CD4-positive, alpha-beta T cell (primary cell): ENCODE measurements at regions of chr4 and their contacts with region 1.

Region 1: GRCh38 chr4:123649645-123650391 is 253.2 kb downstream of the SPRY1 start:
- DNase-seq: no peak
- ATAC-seq: no peak
- H3K4me3 ChIP-seq: no peak overlapping the region
- H3K4me3 Mint-ChIP-seq: no peak overlapping the region
- H3K27ac ChIP-seq: no peak overlapping the region
- H3K27ac Mint-ChIP-seq: no peak overlapping the region
- H3K4me1 ChIP-seq: no peaks in the 10 kb centered on the region
- H3K4me1 Mint-ChIP-seq: no peaks in the 10 kb centered on the region
- H3K27me3 ChIP-seq: no peaks in the 10 kb centered on the region
- H3K27me3 Mint-ChIP-seq: no peaks in the 10 kb centered on the region
- CTCF ChIP-seq: no peak

Region 2: GRCh38 chr4:123564758-123565346 is 85.0 kb before region 1 on chr4:
- CTCF ChIA-PET with region 1: no interaction called
- POLR2A ChIA-PET with region 1: no interaction called
- intact Hi-C with region 1: loop called in 1 of 2 experiments (anchors 10 kb)
- DNase-seq: peak in 12 of 14 experiments; percentile 8 to 79 (median 22)
- ATAC-seq: peak; percentile 86
- H3K4me3 ChIP-seq: no peak overlapping the region
- H3K4me3 Mint-ChIP-seq: no peak overlapping the region
- H3K27ac ChIP-seq: no peak overlapping the region
- H3K27ac Mint-ChIP-seq: no peak overlapping the region
- H3K4me1 ChIP-seq: no peaks in the 10 kb centered on the region
- H3K4me1 Mint-ChIP-seq: no peaks in the 10 kb centered on the region
- H3K27me3 ChIP-seq: no peaks in the 10 kb centered on the region
- H3K27me3 Mint-ChIP-seq: peaks cover 4% of the 10 kb centered on the region
- CTCF ChIP-seq: peak; percentile 88